Left lung (tissue), 14 donors: ENCODE measurements at regions of chr18 and their contacts with region 1.

Region 1: DNA sequence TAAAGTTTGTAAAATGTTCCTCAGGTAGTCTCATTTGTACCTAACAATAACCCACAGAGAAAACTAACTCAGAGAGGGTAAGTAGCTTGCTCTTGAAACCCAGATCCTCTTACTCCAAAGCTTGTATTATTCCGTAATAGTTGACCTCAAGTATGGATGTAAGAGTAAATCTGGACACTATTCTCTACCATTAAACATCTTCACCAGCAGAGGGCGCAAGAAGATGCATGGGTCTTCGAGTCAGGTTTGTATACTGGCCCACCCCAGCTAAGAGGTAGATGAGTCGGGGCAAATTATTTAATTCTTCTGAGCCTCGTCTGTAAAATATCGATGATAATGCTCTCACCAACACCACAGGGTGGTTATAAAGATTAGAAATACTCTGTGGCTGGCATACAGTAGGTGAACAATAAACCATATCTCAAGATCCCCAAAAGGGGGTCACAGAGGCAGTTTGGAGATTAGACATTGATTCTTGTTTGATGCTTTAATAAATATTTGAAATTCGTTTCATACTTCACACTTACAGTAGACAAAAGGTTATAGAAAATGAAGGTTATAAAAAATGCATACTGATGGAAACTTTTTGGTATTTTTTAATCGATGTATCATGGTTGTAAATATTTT is 3.5 kb upstream of the CABLES1 start:
- DNase-seq: peak in 1 of 4 donors; percentile 82
- ATAC-seq: peak; percentile 53
- H3K4me3 ChIP-seq: no peak overlapping the region
- H3K27ac ChIP-seq: no peak overlapping the region
- H3K4me1 ChIP-seq: peaks cover 9 to 34% of the 10 kb centered on the region in 2 donors
- H3K27me3 ChIP-seq: peaks cover 0 to 34% of the 10 kb centered on the region in 2 donors
- CTCF ChIP-seq: peak; percentile 62

Region 2: GRCh38 chr18:23231340-23232021 is 99.7 kb after region 1 on chr18:
- intact Hi-C with region 1: loop called in 1 of 2 experiments (anchors 5 kb)
- DNase-seq: peak in 2 of 4 donors; percentile 58 to 78
- ATAC-seq: peak; percentile 59
- H3K4me3 ChIP-seq: no peak overlapping the region
- H3K27ac ChIP-seq: peak overlapping the region; percentile 68 to 76
- H3K4me1 ChIP-seq: peaks cover 23 to 44% of the 10 kb centered on the region in 2 donors
- H3K27me3 ChIP-seq: no peaks in the 10 kb centered on the region
- CTCF ChIP-seq: no peak

Region 3: GRCh38 chr18:23365602-23366001 is 233.8 kb after region 1 on chr18:
- intact Hi-C with region 1: loop called in 1 of 2 experiments (anchors 10 kb)
- DNase-seq: no peak
- ATAC-seq: peak; percentile 37
- H3K4me3 ChIP-seq: no peak overlapping the region
- H3K27ac ChIP-seq: no peak overlapping the region
- H3K4me1 ChIP-seq: no peaks in the 10 kb centered on the region
- H3K27me3 ChIP-seq: no peaks in the 10 kb centered on the region
- CTCF ChIP-seq: no peak